B cell (primary cell): ENCODE measurements at regions of chr1 and their contacts with region 1.

Region 1: GRCh38 chr1:9588551-9589143 is at the start of gene TMEM201:
- DNase-seq: peak; percentile 96
- ATAC-seq: peak; percentile 91
- H3K4me3 ChIP-seq: peak within 1 kb of the TSS; percentile 33 to 62 (median 58)
- H3K4me3 Mint-ChIP-seq: peak within 1 kb of the TSS; percentile 91
- H3K27ac ChIP-seq: peak within 1 kb of the TSS in 1 of 2 donors; percentile 6
- H3K27ac Mint-ChIP-seq: peak within 1 kb of the TSS; percentile 82
- H3K4me1 ChIP-seq: peaks cover 33 to 42% of the 10 kb centered on the region in 2 donors
- H3K4me1 Mint-ChIP-seq: peaks cover 38% of the 10 kb centered on the region
- H3K27me3 ChIP-seq: no peaks in the 10 kb centered on the region
- H3K27me3 Mint-ChIP-seq: no peaks in the 10 kb centered on the region
- CTCF ChIP-seq: peak; percentile 80
- total RNA-seq, gene TMEM201: 9.1 and 11.2 TPM in 2 replicates

Region 2: GRCh38 chr1:9466780-9467758 is 121.6 kb before region 1 on chr1:
- CTCF ChIA-PET with region 1: no interaction called
- POLR2A ChIA-PET with region 1: no interaction called
- intact Hi-C with region 1: no loop called
- DNase-seq: no peak
- ATAC-seq: no peak
- H3K4me3 ChIP-seq: no peak overlapping the region
- H3K4me3 Mint-ChIP-seq: no peak overlapping the region
- H3K27ac ChIP-seq: no peak overlapping the region
- H3K27ac Mint-ChIP-seq: no peak overlapping the region
- H3K4me1 ChIP-seq: no peaks in the 10 kb centered on the region
- H3K4me1 Mint-ChIP-seq: no peaks in the 10 kb centered on the region
- H3K27me3 ChIP-seq: peaks cover 0 to 8% (median 2%) of the 10 kb centered on the region in 4 experiments
- H3K27me3 Mint-ChIP-seq: peaks cover 30% of the 10 kb centered on the region
- CTCF ChIP-seq: no peak

Region 3: GRCh38 chr1:9539165-9539828 is 49.4 kb before region 1 on chr1 and contains the start of gene SLC25A33:
- CTCF ChIA-PET with region 1: no interaction called
- POLR2A ChIA-PET with region 1: no interaction called
- intact Hi-C with region 1: loop called (anchors 1 kb)
- DNase-seq: peak; percentile 99
- ATAC-seq: peak; percentile 97
- H3K4me3 ChIP-seq: peak within 1 kb of the TSS; percentile 24 to 80 (median 73)
- H3K4me3 Mint-ChIP-seq: peak within 1 kb of the TSS; percentile 97
- H3K27ac ChIP-seq: peak within 1 kb of the TSS; percentile 78 to 90
- H3K27ac Mint-ChIP-seq: peak within 1 kb of the TSS; percentile 98
- H3K4me1 ChIP-seq: peaks cover 12 to 16% of the 10 kb centered on the region in 2 donors
- H3K4me1 Mint-ChIP-seq: peaks cover 29% of the 10 kb centered on the region
- H3K27me3 ChIP-seq: no peaks in the 10 kb centered on the region
- H3K27me3 Mint-ChIP-seq: no peaks in the 10 kb centered on the region
- CTCF ChIP-seq: no peak
- total RNA-seq, gene SLC25A33: 5.0 and 5.9 TPM in 2 replicates

Region 4: GRCh38 chr1:9689011-9689706 is 100.5 kb after region 1 on chr1:
- CTCF ChIA-PET with region 1: interaction called, 3 read pairs
- POLR2A ChIA-PET with region 1: no interaction called
- intact Hi-C with region 1: loop called (anchors 2 kb)
- DNase-seq: peak; percentile 81
- ATAC-seq: peak; percentile 83
- H3K4me3 ChIP-seq: peak overlapping the region; percentile 34 to 68 (median 59)
- H3K4me3 Mint-ChIP-seq: peak overlapping the region; percentile 85
- H3K27ac ChIP-seq: peak overlapping the region in 1 of 2 donors; percentile 47
- H3K27ac Mint-ChIP-seq: peak overlapping the region; percentile 50
- H3K4me1 ChIP-seq: peaks cover 59 to 63% of the 10 kb centered on the region in 2 donors
- H3K4me1 Mint-ChIP-seq: peaks cover 64% of the 10 kb centered on the region
- H3K27me3 ChIP-seq: no peaks in the 10 kb centered on the region
- H3K27me3 Mint-ChIP-seq: no peaks in the 10 kb centered on the region
- CTCF ChIP-seq: no peak

Region 5: DNA sequence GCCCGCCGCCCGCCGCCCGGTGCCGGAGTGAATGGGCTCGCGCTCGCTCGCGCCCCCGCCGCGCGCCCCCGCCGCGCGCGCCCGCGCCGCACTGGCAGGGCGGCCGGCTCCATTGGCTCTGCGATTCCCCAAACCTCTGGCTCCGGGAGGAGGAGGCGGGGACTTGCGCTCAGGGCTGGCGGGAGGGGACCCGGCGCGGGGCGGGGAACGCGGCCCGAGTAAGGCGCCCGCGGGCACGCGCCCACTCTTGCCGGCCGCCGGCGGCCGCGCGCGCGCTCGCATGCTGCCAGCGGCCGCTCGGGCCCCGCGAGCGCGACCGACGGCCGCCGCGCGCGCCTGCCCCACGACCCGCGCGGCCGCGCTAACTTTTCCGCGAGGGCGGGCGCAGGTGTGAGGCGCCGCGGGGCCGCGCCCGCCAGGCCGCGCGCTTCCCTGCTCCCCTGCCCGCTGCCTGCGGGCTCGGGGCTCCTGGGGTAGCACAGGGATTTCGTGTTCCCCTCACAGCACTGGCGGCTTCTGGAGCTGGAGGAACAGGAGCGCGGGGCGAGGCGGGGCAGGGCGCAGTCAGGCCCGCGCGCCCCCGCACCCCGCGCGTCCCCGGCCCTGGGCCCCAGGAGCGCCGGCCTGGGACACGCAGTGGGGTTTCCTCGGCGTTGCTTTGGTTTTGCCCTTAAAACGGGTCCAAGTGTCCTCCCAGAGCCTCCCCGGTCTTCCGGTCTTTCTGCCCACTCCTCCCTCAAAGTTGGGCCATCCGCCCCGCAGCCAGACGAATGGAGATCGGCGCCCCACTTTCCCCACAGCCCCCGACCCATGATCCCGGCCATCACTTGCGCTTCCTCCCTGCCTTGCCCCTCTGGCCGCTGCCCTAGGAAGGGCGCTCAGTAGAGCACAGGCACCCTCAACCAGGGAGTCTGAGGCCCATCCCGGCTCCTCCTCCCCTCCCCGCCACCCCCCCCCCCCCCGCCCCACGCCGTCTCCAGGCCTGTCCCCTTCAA is 1106.3 kb after region 1 on chr1:
- CTCF ChIA-PET with region 1: no interaction called
- POLR2A ChIA-PET with region 1: no interaction called
- intact Hi-C with region 1: loop called (anchors 10 kb)
- DNase-seq: peak; percentile 92
- ATAC-seq: peak; percentile 73
- H3K4me3 ChIP-seq: peak overlapping the region in 4 of 5 experiments; percentile 24 to 63 (median 50)
- H3K4me3 Mint-ChIP-seq: peak overlapping the region; percentile 87
- H3K27ac ChIP-seq: peak overlapping the region in 1 of 2 donors; percentile 68
- H3K27ac Mint-ChIP-seq: peak overlapping the region; percentile 85
- H3K4me1 ChIP-seq: peaks cover 16 to 24% of the 10 kb centered on the region in 2 donors
- H3K4me1 Mint-ChIP-seq: peaks cover 19% of the 10 kb centered on the region
- H3K27me3 ChIP-seq: no peaks in the 10 kb centered on the region
- H3K27me3 Mint-ChIP-seq: peaks cover 8% of the 10 kb centered on the region
- CTCF ChIP-seq: no peak